Activated naive CD4-positive, alpha-beta T cell treated with anti-CD3 and anti-CD28 coated beads for 36 hours (primary cell): ENCODE measurements at regions of chr19 and their contacts with region 1.

Region 1: GRCh38 chr19:38849860-38850435 is at the start of gene HNRNPL:
- DNase-seq: peak; percentile 100
- H3K4me3 Mint-ChIP-seq: peak within 1 kb of the TSS; percentile 91
- H3K27ac Mint-ChIP-seq: peak within 1 kb of the TSS; percentile 96
- H3K4me1 Mint-ChIP-seq: peaks cover 50% of the 10 kb centered on the region
- H3K27me3 Mint-ChIP-seq: no peaks in the 10 kb centered on the region
- total RNA-seq, gene HNRNPL: 777 to 829 TPM

Region 2: DNA sequence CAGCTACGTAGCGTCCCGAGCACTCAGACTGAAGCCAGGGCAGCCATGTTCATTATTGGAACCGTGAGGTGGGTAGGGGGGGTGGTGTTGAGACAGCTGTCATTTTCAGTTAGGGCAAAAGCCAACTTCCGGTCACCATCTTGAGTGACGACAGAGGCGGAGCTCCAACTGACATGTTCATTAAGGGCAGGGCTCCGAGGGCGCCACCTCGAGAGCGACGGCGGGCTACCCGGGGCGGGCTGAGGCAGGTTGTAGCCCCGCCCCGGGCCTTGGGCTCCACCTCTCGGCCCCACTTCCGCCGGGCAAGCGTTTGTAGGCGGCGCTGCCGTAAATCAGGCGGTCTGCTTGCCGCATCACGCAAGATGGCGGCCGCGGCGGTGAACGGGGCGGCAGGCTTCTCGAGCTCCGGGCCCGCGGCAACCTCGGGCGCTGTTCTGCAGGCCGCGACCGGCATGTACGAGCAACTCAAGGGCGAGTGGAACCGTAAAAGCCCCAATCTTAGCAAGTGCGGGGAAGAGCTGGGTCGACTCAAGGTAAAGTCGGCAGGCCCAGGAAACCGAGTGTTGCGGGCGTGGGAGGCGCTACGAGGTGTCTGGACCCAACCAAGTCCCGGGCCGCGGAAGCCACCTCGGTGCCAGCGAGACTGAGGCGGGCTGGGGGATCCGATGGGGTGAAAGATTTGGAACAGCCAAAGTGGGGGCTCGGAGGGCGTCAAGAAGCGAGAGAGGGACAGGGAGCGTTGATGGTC is 475.3 kb before region 1 on chr19 and contains the start of gene PSMD8:
- CTCF ChIA-PET with region 1: no interaction called
- intact Hi-C with region 1: loop called (anchors 10 kb)
- DNase-seq: peak; percentile 100
- H3K4me3 Mint-ChIP-seq: peak within 1 kb of the TSS; percentile 98
- H3K27ac Mint-ChIP-seq: peak within 1 kb of the TSS; percentile 93
- H3K4me1 Mint-ChIP-seq: peaks cover 32% of the 10 kb centered on the region
- H3K27me3 Mint-ChIP-seq: no peaks in the 10 kb centered on the region
- total RNA-seq, gene PSMD8: 194 to 204 TPM

Region 3: DNA sequence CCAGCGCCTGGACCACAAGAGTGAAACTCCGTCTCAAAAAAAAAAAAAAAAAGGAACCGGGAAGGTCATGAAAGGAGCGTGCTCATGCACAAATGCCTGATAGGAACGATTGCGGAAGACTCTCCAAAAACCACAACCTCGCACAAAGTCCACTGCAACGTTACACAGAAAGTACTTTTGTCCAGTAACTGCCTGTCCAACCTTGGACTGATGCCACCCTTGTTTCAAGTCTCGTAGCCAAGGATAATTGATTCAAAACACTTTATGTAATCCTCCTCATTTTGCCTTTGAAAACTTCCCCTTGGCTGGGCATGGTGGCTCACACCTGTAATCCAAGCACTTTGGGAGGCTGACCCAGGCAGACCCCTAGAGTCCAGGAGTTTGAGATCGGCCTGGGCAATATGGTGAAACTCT is 90.4 kb before region 1 on chr19:
- CTCF ChIA-PET with region 1: no interaction called
- intact Hi-C with region 1: no loop called
- DNase-seq: no peak
- H3K4me3 Mint-ChIP-seq: no peak overlapping the region
- H3K27ac Mint-ChIP-seq: no peak overlapping the region
- H3K4me1 Mint-ChIP-seq: no peaks in the 10 kb centered on the region
- H3K27me3 Mint-ChIP-seq: no peaks in the 10 kb centered on the region

Region 4: GRCh38 chr19:38831142-38831605 is 18.8 kb before region 1 on chr19:
- CTCF ChIA-PET with region 1: interaction called, 3 read pairs
- intact Hi-C with region 1: loop called (anchors 1 kb)
- DNase-seq: peak; percentile 64
- H3K4me3 Mint-ChIP-seq: peak overlapping the region; percentile 79
- H3K27ac Mint-ChIP-seq: peak overlapping the region; percentile 94
- H3K4me1 Mint-ChIP-seq: peaks cover 34% of the 10 kb centered on the region
- H3K27me3 Mint-ChIP-seq: no peaks in the 10 kb centered on the region

Region 5: DNA sequence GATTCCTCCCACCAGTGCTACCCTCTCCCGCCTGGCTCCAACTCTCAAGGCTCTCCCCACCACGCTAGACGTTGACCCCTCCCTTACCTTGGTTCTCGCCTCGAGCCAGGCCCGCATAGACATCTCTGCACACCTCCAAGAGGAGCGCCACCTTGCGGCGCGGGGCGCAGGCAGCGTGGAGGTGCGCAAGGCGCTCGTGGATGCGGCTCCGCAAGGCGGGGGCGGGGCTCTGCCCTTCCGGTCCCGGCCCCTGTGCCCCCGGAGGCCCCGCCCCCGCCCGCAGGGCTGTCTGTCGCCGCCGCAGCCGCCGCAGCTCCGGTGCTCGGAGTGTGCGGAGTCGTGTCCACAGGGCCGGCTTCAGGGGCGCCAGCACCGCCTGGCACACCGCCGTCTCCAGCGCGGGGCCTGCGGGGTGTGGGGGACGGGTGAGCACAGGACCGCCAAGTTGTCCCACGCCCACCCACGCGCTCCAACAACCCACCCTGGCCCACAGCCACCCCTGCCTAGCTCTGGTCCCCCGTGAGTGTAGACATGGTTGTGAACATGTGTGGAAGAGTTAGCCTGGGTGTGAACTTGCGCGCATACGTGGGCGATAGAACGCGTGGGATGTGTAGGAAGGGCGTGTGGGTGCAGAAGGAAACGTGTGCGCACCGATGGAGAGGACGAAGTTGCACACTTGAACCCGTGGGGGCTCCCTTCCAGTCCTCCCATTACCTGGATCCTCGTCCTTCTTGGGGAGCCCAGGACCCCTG is 20.1 kb after region 1 on chr19:
- CTCF ChIA-PET with region 1: interaction called, 13 read pairs
- intact Hi-C with region 1: loop called (anchors 1 kb)
- DNase-seq: peak; percentile 92
- H3K4me3 Mint-ChIP-seq: peak overlapping the region; percentile 89
- H3K27ac Mint-ChIP-seq: peak overlapping the region; percentile 89
- H3K4me1 Mint-ChIP-seq: peaks cover 40% of the 10 kb centered on the region
- H3K27me3 Mint-ChIP-seq: no peaks in the 10 kb centered on the region

Region 6: GRCh38 chr19:38929929-38930775 is 80.2 kb after region 1 on chr19 and contains the start of gene SARS2:
- CTCF ChIA-PET with region 1: interaction called, 3 read pairs
- intact Hi-C with region 1: loop called (anchors 1 kb)
- DNase-seq: peak; percentile 94
- H3K4me3 Mint-ChIP-seq: peak within 1 kb of the TSS; percentile 98
- H3K27ac Mint-ChIP-seq: peak within 1 kb of the TSS; percentile 96
- H3K4me1 Mint-ChIP-seq: peaks cover 41% of the 10 kb centered on the region
- H3K27me3 Mint-ChIP-seq: no peaks in the 10 kb centered on the region
- total RNA-seq, gene SARS2: 43.6 to 52.6 TPM

Region 7: DNA sequence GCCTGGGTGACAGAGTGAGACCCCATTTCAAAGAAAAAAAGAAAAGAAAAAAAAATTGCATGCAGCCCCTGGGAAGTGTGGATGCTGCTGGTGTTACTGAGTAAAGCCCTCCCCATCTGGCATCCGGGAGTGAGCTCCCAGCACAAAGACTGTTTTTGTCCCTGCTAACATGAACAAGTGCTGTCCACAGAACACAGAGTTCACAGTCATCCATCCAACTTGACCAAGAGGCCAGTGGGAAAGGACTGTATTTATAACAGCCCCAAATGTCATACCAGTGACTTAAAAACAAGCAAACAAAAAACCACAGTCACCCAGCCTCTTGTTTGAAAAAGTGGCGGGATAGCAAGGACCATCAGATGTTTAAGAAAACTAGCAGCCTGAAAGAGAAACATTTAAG is 114.8 kb after region 1 on chr19:
- CTCF ChIA-PET with region 1: no interaction called
- intact Hi-C with region 1: no loop called
- DNase-seq: no peak
- H3K4me3 Mint-ChIP-seq: no peak overlapping the region
- H3K27ac Mint-ChIP-seq: no peak overlapping the region
- H3K4me1 Mint-ChIP-seq: no peaks in the 10 kb centered on the region
- H3K27me3 Mint-ChIP-seq: peaks cover 2% of the 10 kb centered on the region

Region 8: DNA sequence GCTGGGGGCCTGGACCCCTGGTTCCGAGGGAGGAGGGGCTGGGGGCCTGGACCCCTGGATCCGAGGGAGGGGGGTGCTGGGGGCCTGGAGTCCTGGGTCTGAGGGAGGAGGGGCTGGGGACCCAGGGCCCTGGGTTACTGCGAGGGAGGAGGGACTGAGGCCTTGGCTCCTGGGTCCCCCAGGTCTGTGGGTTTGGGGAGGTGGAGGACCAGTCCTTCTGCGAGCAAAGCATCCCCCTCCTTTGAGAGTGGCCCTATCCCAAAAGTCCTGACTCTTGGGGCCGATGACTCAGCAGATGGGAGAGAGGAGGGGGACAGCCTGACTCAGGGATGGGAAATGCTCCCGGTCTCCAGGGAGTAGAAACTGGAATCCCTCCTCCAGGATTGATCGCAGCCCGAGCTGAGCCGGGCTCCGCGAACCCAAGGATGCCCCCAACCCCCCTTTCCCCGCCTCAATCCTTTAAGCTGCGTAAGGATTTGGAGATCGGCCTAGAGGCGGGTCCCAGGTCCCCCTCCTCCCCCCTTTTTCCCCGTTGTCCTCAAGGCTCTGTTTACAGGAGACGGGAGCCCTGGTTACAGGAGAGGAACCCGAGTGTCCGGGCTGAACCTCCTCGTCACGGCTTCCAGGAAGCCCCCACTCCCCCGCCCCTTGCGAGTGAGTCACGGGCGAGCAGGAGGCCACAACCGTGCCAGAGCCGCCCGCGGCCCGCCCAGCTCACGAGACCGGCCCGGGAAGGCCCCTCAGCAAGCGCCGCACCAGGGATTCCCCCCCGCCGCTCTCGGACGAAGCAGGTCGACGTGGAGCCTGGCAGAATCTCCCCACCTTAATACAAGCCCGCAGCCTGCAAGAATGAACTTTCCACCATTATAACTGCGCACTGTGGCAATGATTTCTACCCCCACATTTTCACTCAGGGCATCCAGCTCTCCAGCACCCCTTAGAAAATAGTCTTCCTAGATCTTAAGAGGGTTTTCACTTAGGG is 553.7 kb after region 1 on chr19:
- CTCF ChIA-PET with region 1: no interaction called
- intact Hi-C with region 1: loop called (anchors 2 kb)
- DNase-seq: peak; percentile 99
- H3K4me3 Mint-ChIP-seq: peak overlapping the region; percentile 84
- H3K27ac Mint-ChIP-seq: peak overlapping the region; percentile 93
- H3K4me1 Mint-ChIP-seq: peaks cover 60% of the 10 kb centered on the region
- H3K27me3 Mint-ChIP-seq: no peaks in the 10 kb centered on the region